ENCODE measurements at regions of chr6 and their contacts with region 1.

Region 1: GRCh38 chr6:32195652-32195901 is 3.1 kb upstream of the GPSM3 start:
- DNase-seq: peak; percentile 99 to 100 (median 100)
- H3K4me3 ChIP-seq: peak overlapping the region in 1 of 2 donors; percentile 97
- H3K4me3 Mint-ChIP-seq: peak overlapping the region; percentile 93 to 100 (median 98)
- H3K27ac ChIP-seq: peak overlapping the region; percentile 98
- H3K27ac Mint-ChIP-seq: peak overlapping the region; percentile 97 to 100 (median 99)
- H3K4me1 ChIP-seq: peaks cover 33% of the 10 kb centered on the region
- H3K4me1 Mint-ChIP-seq: peaks cover 23 to 58% (median 27%) of the 10 kb centered on the region in 4 donors
- H3K27me3 ChIP-seq: no peaks in the 10 kb centered on the region
- H3K27me3 Mint-ChIP-seq: peaks cover 0 to 2% of the 10 kb centered on the region in 2 donors

Region 2: GRCh38 chr6:32118782-32119628 is 76.6 kb before region 1 on chr6:
- CTCF ChIA-PET with region 1: interaction called, 13 read pairs
- POLR2A ChIA-PET with region 1: interaction called, 9 read pairs
- intact Hi-C with region 1: loop called (anchors 1 kb)
- DNase-seq: peak in 4 of 5 donors; percentile 59 to 65 (median 63)
- H3K4me3 ChIP-seq: no peak overlapping the region
- H3K4me3 Mint-ChIP-seq: no peak overlapping the region
- H3K27ac ChIP-seq: no peak overlapping the region
- H3K27ac Mint-ChIP-seq: peak overlapping the region in 6 of 7 donors; percentile 47 to 90 (median 72)
- H3K4me1 ChIP-seq: peaks cover 8% of the 10 kb centered on the region
- H3K4me1 Mint-ChIP-seq: peaks cover 3 to 19% (median 11%) of the 10 kb centered on the region in 4 donors
- H3K27me3 ChIP-seq: no peaks in the 10 kb centered on the region
- H3K27me3 Mint-ChIP-seq: no peaks in the 10 kb centered on the region

Region 3: DNA sequence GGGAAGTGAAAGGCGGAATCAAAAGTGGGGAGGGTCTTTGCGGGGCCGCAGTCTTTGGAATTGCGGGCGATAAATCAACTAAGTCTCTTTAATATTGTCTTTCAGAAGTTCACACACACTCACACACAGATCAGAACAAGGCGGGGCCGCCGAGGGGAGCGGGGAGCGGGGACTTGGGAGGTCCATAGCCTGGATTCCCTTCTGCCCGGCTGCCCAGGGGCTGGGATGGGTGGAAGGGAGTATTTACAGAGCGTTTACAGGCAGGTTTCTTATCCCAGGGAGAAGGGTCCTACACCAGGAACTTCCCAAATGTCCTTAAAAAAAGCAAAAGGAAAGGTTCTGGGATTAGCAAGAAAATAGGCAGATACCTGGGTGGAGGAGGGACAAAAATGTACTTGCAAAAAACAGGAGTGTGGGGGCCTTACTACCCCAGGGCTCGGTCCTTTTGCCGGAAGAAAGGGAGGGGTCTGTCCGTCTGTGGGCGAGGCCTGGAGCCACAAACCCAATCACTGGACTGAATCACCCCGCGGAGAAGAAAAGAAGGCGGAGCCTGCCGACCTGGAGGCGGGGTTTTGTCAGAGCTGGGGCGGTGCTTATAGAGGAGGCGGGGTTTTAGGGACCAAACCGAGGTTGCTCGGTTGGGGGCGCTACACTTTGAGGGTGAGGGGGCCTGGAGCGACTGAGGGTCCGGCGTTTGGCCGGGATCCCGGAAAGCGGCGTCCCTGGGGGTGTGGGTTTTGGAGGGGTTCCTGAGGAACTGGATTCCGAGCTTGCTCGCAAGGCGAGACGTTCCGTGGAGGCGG is 47.1 kb before region 1 on chr6:
- CTCF ChIA-PET with region 1: no interaction called
- POLR2A ChIA-PET with region 1: interaction called, 4 read pairs
- intact Hi-C with region 1: loop called (anchors 1 kb)
- DNase-seq: peak; percentile 58 to 75 (median 66)
- H3K4me3 ChIP-seq: peak overlapping the region in 1 of 2 donors; percentile 38
- H3K4me3 Mint-ChIP-seq: peak overlapping the region; percentile 80 to 87 (median 85)
- H3K27ac ChIP-seq: no peak overlapping the region
- H3K27ac Mint-ChIP-seq: peak overlapping the region in 6 of 7 donors; percentile 17 to 86 (median 80)
- H3K4me1 ChIP-seq: peaks cover 3% of the 10 kb centered on the region
- H3K4me1 Mint-ChIP-seq: peaks cover 17 to 53% (median 32%) of the 10 kb centered on the region in 4 donors
- H3K27me3 ChIP-seq: peaks cover 6% of the 10 kb centered on the region
- H3K27me3 Mint-ChIP-seq: peaks cover 27 to 30% of the 10 kb centered on the region in 2 donors

Region 4: DNA sequence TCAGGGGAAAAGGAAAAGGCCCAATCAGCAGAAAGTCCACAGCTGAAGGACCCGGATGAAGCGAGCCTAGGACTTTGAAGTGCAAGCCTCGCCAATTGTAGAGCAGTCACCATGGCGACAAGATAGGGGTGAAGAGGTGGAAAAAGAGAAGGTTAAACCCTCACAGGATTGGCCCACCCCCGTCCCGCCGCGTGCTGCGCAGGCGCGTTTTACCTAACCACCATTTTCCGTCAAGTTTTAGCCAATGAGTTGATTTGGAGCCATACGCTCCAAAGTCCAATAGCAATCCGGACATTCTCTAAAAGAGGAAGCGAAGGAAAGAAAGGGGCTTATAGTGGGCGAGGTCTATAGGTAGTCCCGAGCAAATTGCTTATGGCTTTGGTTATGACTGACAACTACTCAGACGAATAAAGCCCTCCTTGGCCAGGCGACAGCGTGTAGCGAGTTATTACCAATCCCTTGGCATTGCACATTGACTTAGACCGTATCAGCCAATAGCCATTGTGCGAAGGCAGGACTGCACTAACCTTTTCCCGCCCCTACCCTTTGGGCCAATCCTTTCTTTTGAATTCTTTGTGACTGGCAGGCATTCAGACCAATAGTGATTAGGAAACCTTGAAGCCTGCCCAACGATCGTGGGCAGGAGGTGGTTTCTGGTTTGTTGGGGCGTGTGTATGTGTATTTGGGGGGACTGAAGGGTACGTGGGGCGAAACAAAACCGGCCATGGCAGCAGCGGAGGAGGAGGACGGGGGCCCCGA is 17.6 kb before region 1 on chr6 and contains the start of gene RNF5:
- CTCF ChIA-PET with region 1: interaction called, 18 read pairs
- POLR2A ChIA-PET with region 1: interaction called, 408 read pairs
- intact Hi-C with region 1: loop called (anchors 1 kb)
- DNase-seq: peak; percentile 96 to 99 (median 98)
- H3K4me3 ChIP-seq: peak within 1 kb of the TSS; percentile 74 to 87
- H3K4me3 Mint-ChIP-seq: peak within 1 kb of the TSS; percentile 92 to 100 (median 96)
- H3K27ac ChIP-seq: peak within 1 kb of the TSS; percentile 91
- H3K27ac Mint-ChIP-seq: peak within 1 kb of the TSS; percentile 97 to 100 (median 99)
- H3K4me1 ChIP-seq: peaks cover 79% of the 10 kb centered on the region
- H3K4me1 Mint-ChIP-seq: peaks cover 50 to 84% (median 66%) of the 10 kb centered on the region in 4 donors
- H3K27me3 ChIP-seq: no peaks in the 10 kb centered on the region
- H3K27me3 Mint-ChIP-seq: no peaks in the 10 kb centered on the region
- total RNA-seq, gene RNF5: 44.2 to 47.7 TPM

Region 5: DNA sequence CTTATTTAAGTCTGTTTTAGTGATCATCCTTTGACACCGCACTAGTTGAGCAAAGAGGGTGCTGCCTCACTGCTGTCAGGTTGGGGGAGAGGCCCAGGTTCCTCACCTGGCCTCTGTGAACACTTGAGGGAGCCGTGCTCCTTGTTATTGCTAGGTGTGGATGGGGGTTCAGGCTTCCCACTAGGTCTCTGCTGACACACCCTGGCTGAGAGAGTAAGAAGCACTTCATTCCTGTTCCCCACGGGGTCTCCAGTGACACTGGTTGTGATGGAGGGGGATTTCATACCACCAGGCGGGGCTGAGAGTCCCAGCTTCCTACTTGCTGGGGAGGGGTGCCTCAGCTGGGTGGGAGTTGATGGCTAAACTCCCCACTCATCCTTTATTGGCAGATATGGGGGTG is 39.4 kb after region 1 on chr6:
- CTCF ChIA-PET with region 1: no interaction called
- POLR2A ChIA-PET with region 1: no interaction called
- intact Hi-C with region 1: no loop called
- DNase-seq: no peak
- H3K4me3 ChIP-seq: no peak overlapping the region
- H3K4me3 Mint-ChIP-seq: no peak overlapping the region
- H3K27ac ChIP-seq: no peak overlapping the region
- H3K27ac Mint-ChIP-seq: no peak overlapping the region
- H3K4me1 ChIP-seq: no peaks in the 10 kb centered on the region
- H3K4me1 Mint-ChIP-seq: no peaks in the 10 kb centered on the region
- H3K27me3 ChIP-seq: no peaks in the 10 kb centered on the region
- H3K27me3 Mint-ChIP-seq: peaks cover 0 to 2% of the 10 kb centered on the region in 2 donors

Region 6: DNA sequence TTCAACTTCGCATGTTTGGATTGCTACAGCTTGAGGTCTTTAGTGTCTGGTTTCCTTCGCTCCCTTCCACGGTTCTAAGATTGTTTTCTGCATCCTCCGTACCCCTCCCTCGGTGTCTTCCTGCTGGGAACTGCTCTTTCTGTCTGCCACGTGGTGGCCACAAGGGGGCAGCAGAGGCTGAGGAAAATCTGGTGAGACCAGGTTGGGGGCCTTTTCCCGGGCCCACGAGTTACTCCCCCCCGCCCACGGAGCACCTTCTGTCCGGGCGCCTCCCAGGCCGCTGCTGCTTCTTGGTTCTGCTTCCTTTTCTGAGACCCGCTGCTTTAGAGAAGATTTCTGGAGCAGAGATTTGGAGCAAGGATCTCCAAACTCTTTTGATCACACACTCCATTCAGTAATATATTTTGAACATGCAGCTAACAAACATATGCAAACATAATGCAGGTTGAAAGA is 49.4 kb after region 1 on chr6:
- CTCF ChIA-PET with region 1: interaction called, 5 read pairs
- POLR2A ChIA-PET with region 1: no interaction called
- intact Hi-C with region 1: loop called (anchors 2 kb)
- DNase-seq: peak; percentile 52 to 66 (median 58)
- H3K4me3 ChIP-seq: no peak overlapping the region
- H3K4me3 Mint-ChIP-seq: peak overlapping the region in 7 of 8 donors; percentile 4 to 88 (median 62)
- H3K27ac ChIP-seq: no peak overlapping the region
- H3K27ac Mint-ChIP-seq: peak overlapping the region in 4 of 7 donors; percentile 43 to 79 (median 46)
- H3K4me1 ChIP-seq: peaks cover 9% of the 10 kb centered on the region
- H3K4me1 Mint-ChIP-seq: peaks cover 0 to 11% (median 7%) of the 10 kb centered on the region in 4 donors
- H3K27me3 ChIP-seq: no peaks in the 10 kb centered on the region
- H3K27me3 Mint-ChIP-seq: no peaks in the 10 kb centered on the region

Region 7: GRCh38 chr6:33417903-33418689 is 1222.5 kb after region 1 on chr6 and contains the start of gene CUTA:
- CTCF ChIA-PET with region 1: no interaction called
- POLR2A ChIA-PET with region 1: no interaction called
- intact Hi-C with region 1: loop called (anchors 10 kb)
- DNase-seq: peak; percentile 97 to 100 (median 100)
- H3K4me3 ChIP-seq: peak within 1 kb of the TSS; percentile 82 to 94
- H3K4me3 Mint-ChIP-seq: peak within 1 kb of the TSS; percentile 87 to 97 (median 94)
- H3K27ac ChIP-seq: peak within 1 kb of the TSS; percentile 97
- H3K27ac Mint-ChIP-seq: peak within 1 kb of the TSS; percentile 99 to 100 (median 99)
- H3K4me1 ChIP-seq: peaks cover 72% of the 10 kb centered on the region
- H3K4me1 Mint-ChIP-seq: peaks cover 43 to 87% (median 61%) of the 10 kb centered on the region in 4 donors
- H3K27me3 ChIP-seq: no peaks in the 10 kb centered on the region
- H3K27me3 Mint-ChIP-seq: no peaks in the 10 kb centered on the region
- total RNA-seq, gene CUTA: 210 to 217 TPM

Region 8: GRCh38 chr6:34044945-34045595 is 1849.5 kb after region 1 on chr6:
- CTCF ChIA-PET with region 1: no interaction called
- POLR2A ChIA-PET with region 1: no interaction called
- intact Hi-C with region 1: no loop called
- DNase-seq: peak in 4 of 5 donors; percentile 33 to 59 (median 42)
- H3K4me3 ChIP-seq: no peak overlapping the region
- H3K4me3 Mint-ChIP-seq: no peak overlapping the region
- H3K27ac ChIP-seq: no peak overlapping the region
- H3K27ac Mint-ChIP-seq: peak overlapping the region in 5 of 7 donors; percentile 3 to 58 (median 17)
- H3K4me1 ChIP-seq: peaks cover 7% of the 10 kb centered on the region
- H3K4me1 Mint-ChIP-seq: peaks cover 10 to 18% (median 14%) of the 10 kb centered on the region in 4 donors
- H3K27me3 ChIP-seq: no peaks in the 10 kb centered on the region
- H3K27me3 Mint-ChIP-seq: peaks cover 0 to 8% of the 10 kb centered on the region in 2 donors

Measured in CD4-positive, alpha-beta memory T cell (primary cell).